Stomach (tissue), 19 donors: ENCODE measurements at regions of chr4 and their contacts with region 1.

Region 1: DNA sequence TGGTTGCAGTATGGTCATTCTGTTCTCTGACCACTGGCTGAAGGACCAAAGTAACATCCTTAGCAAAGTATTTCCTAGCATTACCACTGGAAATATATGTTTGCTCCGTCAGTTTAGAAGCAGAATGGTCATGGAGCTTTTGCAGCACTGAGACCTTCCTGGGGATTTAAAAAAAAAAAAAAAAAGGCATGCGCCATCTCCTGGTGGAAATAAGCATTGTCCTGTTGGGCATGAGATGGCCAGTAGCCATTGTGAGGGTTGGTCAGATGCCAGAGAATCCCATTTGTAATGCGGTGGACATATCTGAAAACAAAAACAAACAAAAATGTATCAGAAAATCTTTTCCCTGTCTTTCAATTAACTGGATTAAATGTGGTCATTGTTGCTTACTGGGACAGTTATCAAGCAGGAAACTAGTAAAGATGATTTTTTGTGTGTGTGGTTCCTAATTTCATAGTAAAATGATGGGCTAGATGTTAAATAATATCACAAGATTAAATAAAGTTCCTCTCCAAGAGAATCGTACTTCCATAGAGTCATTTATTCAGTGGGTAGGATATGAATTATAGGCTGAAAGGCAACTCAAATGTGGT is 139.6 kb downstream of the SOWAHB start:
- DNase-seq: peak in 1 of 2 donors; percentile 79
- H3K4me3 ChIP-seq: no peak overlapping the region
- H3K27ac ChIP-seq: peak overlapping the region in 2 of 5 donors; percentile 40 to 41
- H3K4me1 ChIP-seq: peaks cover 0 to 29% (median 10%) of the 10 kb centered on the region in 4 donors
- H3K27me3 ChIP-seq: no peaks in the 10 kb centered on the region
- CTCF ChIP-seq: peak in 5 of 7 experiments; percentile 73 to 89 (median 78)
- EP300 ChIP-seq: no peak
- POLR2A ChIP-seq: no peak

Region 2: DNA sequence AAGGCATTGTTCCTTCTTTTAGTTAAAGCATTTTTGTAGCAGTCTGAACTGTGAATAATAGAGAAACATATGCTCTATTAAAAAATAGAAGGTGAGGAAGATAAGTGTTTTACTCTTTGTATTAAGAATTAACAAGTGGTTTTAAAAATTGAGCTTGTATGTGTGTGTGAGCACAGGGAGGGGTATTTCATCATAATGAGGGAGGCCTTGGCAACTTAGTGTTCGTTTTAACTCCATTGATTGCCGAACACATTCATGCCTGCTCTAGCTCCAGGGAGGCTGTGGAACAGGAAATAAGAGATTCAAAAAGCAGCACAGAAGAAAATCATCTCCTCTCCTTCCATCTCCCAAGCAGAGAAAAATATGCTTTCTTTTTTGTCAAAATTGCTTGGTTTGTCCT is 308.6 kb before region 1 on chr4:
- intact Hi-C with region 1: no loop called
- DNase-seq: peak in 1 of 2 donors; percentile 25
- H3K4me3 ChIP-seq: no peak overlapping the region
- H3K27ac ChIP-seq: no peak overlapping the region
- H3K4me1 ChIP-seq: no peaks in the 10 kb centered on the region
- H3K27me3 ChIP-seq: no peaks in the 10 kb centered on the region
- CTCF ChIP-seq: no peak
- EP300 ChIP-seq: no peak
- POLR2A ChIP-seq: no peak

Region 3: GRCh38 chr4:76515975-76516843 is 242.2 kb before region 1 on chr4:
- intact Hi-C with region 1: loop called (anchors 10 kb)
- DNase-seq: no peak
- H3K4me3 ChIP-seq: no peak overlapping the region
- H3K27ac ChIP-seq: no peak overlapping the region
- H3K4me1 ChIP-seq: peaks cover 0 to 18% (median 7%) of the 10 kb centered on the region in 4 donors
- H3K27me3 ChIP-seq: no peaks in the 10 kb centered on the region
- CTCF ChIP-seq: no peak
- EP300 ChIP-seq: no peak
- POLR2A ChIP-seq: no peak

Region 4: GRCh38 chr4:76624241-76624681 is 134.1 kb before region 1 on chr4:
- intact Hi-C with region 1: no loop called
- DNase-seq: peak in 1 of 2 donors; percentile 92
- H3K4me3 ChIP-seq: peak overlapping the region in 1 of 4 donors; percentile 2
- H3K27ac ChIP-seq: peak overlapping the region in 4 of 5 donors; percentile 75 to 87 (median 80)
- H3K4me1 ChIP-seq: peaks cover 13 to 64% (median 39%) of the 10 kb centered on the region in 4 donors
- H3K27me3 ChIP-seq: no peaks in the 10 kb centered on the region
- CTCF ChIP-seq: no peak
- EP300 ChIP-seq: no peak
- POLR2A ChIP-seq: no peak